Ovary (tissue), 10 donors: ENCODE measurements at regions of chr9 and their contacts with region 1.

Region 1: DNA sequence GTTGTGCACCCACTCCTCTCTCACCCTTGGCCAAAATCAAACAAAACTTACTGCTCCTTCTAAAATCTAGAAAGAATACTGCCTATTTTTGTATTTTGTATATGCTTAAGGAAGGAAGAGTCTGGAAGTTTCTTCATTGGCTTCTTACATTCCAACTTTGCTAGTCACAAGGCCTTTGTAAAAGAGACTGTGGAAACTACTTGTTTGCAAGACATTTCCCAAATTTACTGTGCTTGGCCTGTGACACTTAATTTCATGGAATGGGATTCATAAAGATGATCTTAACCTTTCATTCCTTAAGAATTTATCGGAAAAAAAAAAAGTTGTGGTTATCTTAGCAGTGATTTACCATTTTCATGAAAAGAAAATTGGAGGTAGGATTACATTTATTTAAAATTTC is 208.9 kb downstream of the VPS13A start:
- DNase-seq: no peak
- H3K4me3 ChIP-seq: no peak overlapping the region
- H3K27ac ChIP-seq: no peak overlapping the region
- H3K4me1 ChIP-seq: no peaks in the 10 kb centered on the region
- H3K27me3 ChIP-seq: no peaks in the 10 kb centered on the region
- CTCF ChIP-seq: no peak
- EP300 ChIP-seq: no peak
- POLR2A ChIP-seq: no peak

Region 2: DNA sequence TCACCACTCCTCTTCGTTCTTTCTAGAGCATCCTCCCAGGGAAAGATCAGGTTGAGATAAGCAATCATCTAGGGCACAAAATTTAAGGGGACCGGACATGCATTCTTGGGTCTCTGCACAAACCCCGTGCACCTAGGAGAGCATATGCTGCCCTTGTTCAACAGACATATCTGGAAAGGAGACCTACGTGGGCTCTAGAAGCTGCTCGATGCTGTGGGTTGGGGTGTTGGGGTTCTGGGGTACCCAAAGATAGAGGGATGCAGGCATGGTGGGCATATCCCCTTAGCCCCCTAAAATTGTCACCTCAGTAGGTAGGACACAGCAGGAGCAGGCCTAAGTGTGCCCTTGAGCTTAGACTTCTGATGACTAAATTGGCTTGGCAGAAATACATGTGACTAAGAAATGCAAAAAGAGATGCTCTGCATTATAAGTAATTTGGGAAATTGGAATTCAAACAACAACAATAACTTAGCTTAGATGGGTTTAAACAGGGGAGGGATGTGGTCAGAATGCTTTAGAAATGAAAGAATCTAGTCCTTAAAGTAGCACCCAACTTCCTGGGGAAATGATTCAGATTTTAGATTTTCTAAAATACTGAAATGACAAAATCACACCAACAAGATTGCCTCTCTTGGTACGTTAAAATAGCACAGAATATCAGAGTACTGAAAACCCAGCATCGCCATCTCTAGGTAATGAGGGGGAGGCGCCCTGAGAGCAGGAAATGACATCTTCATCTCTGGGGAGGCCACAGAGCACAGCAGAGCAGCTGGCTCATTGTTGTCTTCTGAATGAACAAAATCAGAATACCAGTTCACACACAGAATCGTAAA is 89.7 kb after region 1 on chr9:
- intact Hi-C with region 1: no loop called
- DNase-seq: no peak
- H3K4me3 ChIP-seq: no peak overlapping the region
- H3K27ac ChIP-seq: no peak overlapping the region
- H3K4me1 ChIP-seq: no peaks in the 10 kb centered on the region
- H3K27me3 ChIP-seq: no peaks in the 10 kb centered on the region
- CTCF ChIP-seq: no peak
- EP300 ChIP-seq: no peak
- POLR2A ChIP-seq: no peak

Region 3: GRCh38 chr9:78663369-78663768 is 1277.2 kb after region 1 on chr9:
- intact Hi-C with region 1: loop called in 1 of 4 experiments (anchors 5 kb)
- DNase-seq: no peak
- H3K4me3 ChIP-seq: no peak overlapping the region
- H3K27ac ChIP-seq: no peak overlapping the region
- H3K4me1 ChIP-seq: no peaks in the 10 kb centered on the region
- H3K27me3 ChIP-seq: no peaks in the 10 kb centered on the region
- CTCF ChIP-seq: no peak
- EP300 ChIP-seq: no peak
- POLR2A ChIP-seq: no peak